Activated naive CD4-positive, alpha-beta T cell treated with anti-CD3 and anti-CD28 coated beads for 36 hours (primary cell): ENCODE measurements at regions of chr20 and their contacts with region 1.

Region 1: DNA sequence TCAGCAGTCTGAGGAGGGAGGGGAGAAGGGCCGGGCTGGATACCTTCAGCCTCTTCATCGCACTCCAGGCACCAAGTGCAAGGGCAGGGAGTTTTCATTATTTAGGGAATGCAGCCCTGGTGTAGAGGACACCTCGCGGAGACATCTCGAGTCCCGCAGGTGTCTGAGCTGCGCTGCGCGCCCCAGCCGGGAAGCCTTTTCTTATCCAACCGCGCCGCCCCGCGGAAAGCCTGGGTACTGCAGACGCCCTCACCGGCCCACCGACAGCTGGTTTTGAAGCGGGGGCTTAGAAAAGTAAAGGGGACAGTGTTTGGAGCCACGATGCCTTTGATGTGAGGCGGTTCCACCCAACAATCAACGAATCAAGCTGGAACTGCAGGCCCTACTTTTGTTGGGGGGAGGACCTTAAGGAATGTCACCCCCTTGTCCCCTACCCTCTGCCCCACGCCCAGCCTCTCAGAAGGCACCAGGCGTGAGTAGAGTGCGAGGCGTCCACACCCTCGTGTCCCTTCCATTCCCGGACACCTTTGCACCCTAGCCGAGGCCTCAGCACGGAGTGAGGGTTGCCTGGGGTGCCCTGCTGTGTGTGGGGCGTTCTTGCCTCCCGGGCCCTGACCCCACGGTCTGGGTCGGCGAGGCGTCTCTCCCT is 8.6 kb downstream of the NKX2-2 start:
- DNase-seq: peak; percentile 82
- H3K4me3 Mint-ChIP-seq: peak overlapping the region; percentile 62
- H3K27ac Mint-ChIP-seq: no peak overlapping the region
- H3K4me1 Mint-ChIP-seq: peaks cover 28% of the 10 kb centered on the region
- H3K27me3 Mint-ChIP-seq: peaks cover 53% of the 10 kb centered on the region

Region 2: DNA sequence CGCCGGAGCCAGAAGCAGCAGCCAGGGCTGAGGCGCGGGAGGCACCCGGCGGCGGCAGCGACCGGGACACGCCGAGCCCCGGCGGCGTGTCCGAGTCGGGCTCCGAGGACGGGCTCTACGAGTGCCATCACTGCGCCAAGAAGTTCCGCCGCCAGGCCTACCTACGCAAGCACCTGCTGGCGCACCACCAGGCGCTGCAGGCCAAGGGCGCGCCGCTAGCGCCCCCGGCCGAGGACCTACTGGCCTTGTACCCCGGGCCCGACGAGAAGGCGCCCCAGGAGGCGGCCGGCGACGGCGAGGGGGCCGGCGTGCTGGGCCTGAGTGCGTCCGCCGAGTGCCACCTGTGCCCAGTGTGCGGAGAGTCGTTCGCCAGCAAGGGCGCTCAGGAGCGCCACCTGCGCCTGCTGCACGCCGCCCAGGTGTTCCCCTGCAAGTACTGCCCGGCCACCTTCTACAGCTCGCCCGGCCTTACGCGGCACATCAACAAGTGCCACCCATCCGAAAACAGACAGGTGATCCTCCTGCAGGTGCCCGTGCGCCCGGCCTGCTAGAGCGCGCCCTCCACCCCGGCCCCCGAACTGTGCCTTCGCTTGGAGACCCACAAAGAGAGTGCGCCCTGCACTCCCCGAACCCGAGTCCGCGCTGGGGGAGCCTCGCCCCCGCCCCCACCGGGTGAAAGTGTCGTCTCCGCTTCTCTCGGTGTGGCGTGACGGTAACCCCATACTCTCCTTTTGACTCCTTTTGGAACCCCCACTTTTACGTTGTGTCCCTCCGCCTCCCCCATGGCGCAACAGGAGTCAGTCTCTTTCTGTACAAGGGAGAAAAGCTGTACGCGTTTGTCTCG is 1135.8 kb before region 1 on chr20:
- CTCF ChIA-PET with region 1: no interaction called
- intact Hi-C with region 1: loop called (anchors 5 kb)
- DNase-seq: no peak
- H3K4me3 Mint-ChIP-seq: peak overlapping the region; percentile 46
- H3K27ac Mint-ChIP-seq: no peak overlapping the region
- H3K4me1 Mint-ChIP-seq: peaks cover 17% of the 10 kb centered on the region
- H3K27me3 Mint-ChIP-seq: peaks cover 70% of the 10 kb centered on the region

Region 3: DNA sequence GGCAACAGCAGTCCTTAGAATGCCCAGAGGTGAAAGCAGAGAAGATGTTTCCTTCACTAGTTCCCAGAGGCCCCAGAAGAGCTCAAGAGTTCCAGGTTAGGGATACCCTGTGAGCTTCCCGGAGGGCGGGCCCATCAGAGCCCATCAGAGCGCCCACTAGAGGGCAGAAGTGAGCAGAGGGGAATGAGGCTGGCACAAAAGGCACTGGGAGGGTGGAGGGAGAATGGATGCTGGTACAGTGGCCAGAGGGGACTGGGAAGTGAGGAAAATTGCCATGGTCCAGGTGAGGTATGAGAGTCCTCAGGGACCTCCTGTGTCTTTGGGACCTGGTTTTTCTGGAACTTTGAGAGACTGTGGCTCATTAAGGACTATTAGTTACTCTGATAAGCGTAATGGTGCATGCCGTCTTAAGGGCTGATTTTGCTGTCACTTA is 456.4 kb before region 1 on chr20:
- CTCF ChIA-PET with region 1: interaction called, 5 read pairs
- intact Hi-C with region 1: loop called (anchors 5 kb)
- DNase-seq: peak; percentile 56
- H3K4me3 Mint-ChIP-seq: no peak overlapping the region
- H3K27ac Mint-ChIP-seq: no peak overlapping the region
- H3K4me1 Mint-ChIP-seq: no peaks in the 10 kb centered on the region
- H3K27me3 Mint-ChIP-seq: peaks cover 23% of the 10 kb centered on the region

Region 4: DNA sequence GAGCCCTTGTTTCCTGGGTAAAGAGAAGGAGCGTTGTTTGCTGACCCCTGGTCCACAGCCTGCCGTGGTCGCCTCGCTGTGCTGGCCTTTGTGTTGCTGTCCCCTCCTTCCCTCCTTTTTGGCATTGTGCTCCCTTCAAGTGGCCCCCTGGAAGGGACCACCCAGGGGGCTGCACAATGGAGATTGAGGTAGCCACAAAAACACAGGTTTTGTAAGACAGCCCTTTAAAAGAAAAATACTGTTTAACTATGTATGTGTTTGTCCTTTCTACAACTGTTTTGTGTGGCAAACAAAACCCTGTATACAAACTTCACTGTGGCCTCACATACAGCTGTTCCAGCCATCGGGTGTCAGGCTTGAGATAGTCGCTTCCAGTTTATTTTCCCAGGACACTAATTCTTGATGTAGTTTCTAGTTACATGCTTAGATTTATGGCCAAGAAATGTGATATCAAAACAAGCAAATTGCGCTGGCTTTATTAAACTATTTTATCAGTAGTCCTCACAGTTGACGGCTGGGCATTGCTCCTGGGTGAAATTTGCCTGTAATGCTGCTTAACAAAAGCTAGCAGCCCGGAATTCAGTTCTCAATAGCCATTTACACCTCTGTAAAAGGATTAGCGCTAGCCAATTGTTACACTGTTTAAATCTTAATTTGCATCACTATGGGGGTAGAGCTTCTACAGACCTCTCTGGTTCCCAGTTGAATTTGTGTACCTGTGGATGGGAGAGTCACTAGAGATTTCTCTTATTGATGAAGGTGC is 315.3 kb before region 1 on chr20:
- CTCF ChIA-PET with region 1: no interaction called
- intact Hi-C with region 1: no loop called
- DNase-seq: no peak
- H3K4me3 Mint-ChIP-seq: no peak overlapping the region
- H3K27ac Mint-ChIP-seq: no peak overlapping the region
- H3K4me1 Mint-ChIP-seq: no peaks in the 10 kb centered on the region
- H3K27me3 Mint-ChIP-seq: no peaks in the 10 kb centered on the region

Region 5: DNA sequence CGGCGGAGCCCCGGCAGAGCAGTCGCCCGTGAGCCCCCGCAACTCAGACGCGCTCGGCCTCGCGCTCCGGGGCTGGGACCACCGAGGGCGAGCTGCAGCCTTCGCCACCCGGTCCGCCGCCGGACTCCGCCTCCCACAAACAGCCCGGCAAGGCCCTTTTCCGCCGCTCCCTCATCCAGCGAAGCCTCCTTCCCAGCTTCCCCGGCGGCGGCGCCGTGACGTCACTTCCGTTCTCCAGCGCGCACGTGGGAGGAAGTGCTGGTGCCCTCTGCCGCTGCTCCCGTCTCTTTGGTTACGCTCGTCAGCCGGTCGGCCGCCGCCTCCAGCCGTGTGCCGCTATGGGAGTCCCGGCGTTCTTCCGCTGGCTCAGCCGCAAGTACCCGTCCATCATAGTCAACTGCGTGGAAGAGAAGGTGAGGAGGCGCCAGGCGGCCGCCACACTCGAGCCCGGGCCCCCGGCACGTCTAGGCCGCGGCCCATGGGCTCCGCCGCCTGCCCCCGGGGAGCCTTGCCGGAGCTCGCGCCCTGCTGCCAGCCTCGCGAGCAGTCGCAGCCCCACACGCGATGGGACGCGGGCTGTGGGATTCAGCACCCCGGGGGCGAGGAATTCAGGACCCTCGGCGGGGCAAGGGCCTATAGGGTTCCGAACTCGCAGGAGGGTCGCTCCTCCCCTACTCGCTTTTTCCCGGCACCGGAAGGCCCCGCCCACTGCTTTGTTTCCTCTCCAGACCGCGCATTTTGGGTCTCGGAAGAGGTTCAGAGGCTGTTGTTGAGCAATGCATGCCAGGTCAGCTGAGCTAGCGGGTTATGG is 202.0 kb before region 1 on chr20 and contains the start of gene XRN2:
- CTCF ChIA-PET with region 1: interaction called, 4 read pairs
- intact Hi-C with region 1: loop called (anchors 1 kb)
- DNase-seq: peak; percentile 96
- H3K4me3 Mint-ChIP-seq: peak within 1 kb of the TSS; percentile 94
- H3K27ac Mint-ChIP-seq: peak within 1 kb of the TSS; percentile 96
- H3K4me1 Mint-ChIP-seq: peaks cover 29% of the 10 kb centered on the region
- H3K27me3 Mint-ChIP-seq: no peaks in the 10 kb centered on the region
- total RNA-seq, gene XRN2: 76.5 to 81.9 TPM

Region 6: DNA sequence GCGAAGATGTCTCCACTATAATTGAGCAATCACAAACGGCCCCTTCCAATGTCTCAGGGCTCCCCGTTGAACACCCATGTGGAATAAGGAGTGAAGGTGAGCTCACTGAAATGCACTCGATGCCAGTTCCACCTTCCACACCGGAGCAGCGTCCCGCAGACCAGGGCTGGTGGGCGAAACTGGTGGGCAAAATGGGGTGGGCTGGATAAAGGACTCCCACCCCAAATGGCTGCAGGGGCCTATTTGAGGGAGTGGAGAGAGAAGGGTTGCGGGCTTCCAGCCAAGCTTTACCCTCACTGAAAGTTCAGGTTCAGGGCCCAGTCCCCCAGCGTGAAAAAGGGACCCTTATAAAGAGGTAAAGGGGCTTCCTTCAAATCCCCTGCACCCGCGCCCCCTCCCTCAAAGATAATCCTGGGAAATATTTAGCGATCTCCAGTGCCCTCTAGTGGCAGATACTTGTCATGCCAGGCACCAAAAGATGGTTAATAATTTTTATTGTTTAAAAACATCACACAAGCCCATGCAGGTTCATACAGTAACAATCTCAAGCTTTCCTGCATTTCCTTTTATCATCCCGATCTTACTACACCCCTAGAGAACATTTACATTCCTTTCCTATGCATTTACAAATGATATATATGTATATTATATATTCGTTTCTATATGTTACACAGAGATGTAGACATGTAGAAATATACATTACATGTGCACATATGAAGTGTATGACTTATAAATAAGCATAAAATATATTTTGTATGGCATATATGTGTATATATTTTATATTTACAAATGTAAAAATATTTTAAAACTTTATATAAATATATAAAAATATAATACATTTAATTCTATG is 66.8 kb after region 1 on chr20:
- CTCF ChIA-PET with region 1: interaction called, 5 read pairs
- intact Hi-C with region 1: loop called (anchors 1 kb)
- DNase-seq: peak; percentile 26
- H3K4me3 Mint-ChIP-seq: no peak overlapping the region
- H3K27ac Mint-ChIP-seq: no peak overlapping the region
- H3K4me1 Mint-ChIP-seq: peaks cover 7% of the 10 kb centered on the region
- H3K27me3 Mint-ChIP-seq: peaks cover 7% of the 10 kb centered on the region

Region 7: DNA sequence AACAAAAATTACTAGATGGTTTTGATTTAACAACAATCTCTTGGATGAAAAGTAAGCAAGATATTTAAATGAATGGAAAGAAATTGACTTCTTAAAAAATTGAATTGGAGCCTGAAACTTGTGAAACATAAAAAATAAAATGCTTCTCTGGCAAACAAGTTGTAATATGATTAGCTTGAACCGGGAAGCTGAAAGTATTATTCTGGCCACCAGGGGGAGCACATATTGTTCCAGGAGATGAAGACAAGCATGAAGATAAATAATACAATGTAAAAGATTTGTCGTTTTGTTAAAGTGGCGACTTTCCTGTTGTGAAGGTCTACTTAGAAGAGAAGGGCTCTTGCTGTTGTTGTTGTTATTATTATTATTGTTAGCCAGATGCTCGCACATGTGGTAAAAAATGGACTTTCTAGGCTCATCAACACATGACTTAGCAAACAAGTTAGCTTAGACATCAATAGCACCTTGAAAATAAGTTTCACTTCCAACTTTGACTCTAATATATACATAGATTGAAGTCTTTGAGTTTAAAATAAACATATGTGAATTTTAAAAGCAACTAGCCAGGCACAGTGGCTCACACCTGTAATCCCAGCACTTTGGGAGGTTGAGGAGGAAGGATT is 214.4 kb after region 1 on chr20:
- CTCF ChIA-PET with region 1: no interaction called
- intact Hi-C with region 1: no loop called
- DNase-seq: peak; percentile 69
- H3K4me3 Mint-ChIP-seq: no peak overlapping the region
- H3K27ac Mint-ChIP-seq: no peak overlapping the region
- H3K4me1 Mint-ChIP-seq: peaks cover 3% of the 10 kb centered on the region
- H3K27me3 Mint-ChIP-seq: peaks cover 32% of the 10 kb centered on the region

Region 8: DNA sequence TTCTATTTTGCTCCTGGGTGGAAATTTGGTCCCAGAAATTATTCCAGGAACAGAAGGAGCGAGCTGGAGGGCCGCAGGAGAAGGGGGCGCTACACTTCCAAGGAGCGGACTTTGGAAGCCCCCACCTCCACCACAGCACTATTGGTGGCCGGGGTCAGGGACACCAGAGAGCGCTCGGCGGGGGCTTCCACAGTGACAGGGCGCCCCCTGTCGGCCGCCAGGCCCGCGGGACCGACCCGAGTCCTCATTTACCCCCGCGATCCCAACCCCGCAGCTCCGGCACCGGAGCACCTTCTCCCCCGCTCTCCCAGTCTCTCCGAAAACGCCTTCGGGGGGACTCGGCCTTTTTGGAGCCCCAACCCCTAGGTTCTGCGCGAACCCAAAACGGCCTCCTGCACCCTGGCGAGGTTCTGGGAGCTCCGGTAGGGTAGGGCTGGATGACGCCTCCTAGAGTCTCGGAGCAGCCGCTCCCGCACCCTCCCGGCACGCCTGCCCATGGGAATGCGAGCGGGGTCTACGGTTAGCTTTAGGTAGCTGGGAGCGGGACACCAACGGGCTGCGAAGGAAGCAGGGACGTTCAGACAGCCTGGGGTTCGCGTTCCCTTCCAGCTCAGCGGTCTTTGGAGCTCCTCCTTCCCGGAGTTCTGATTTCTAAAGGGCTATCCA is 1081.5 kb after region 1 on chr20:
- CTCF ChIA-PET with region 1: no interaction called
- intact Hi-C with region 1: loop called (anchors 10 kb)
- DNase-seq: peak; percentile 28
- H3K4me3 Mint-ChIP-seq: no peak overlapping the region
- H3K27ac Mint-ChIP-seq: no peak overlapping the region
- H3K4me1 Mint-ChIP-seq: peaks cover 3% of the 10 kb centered on the region
- H3K27me3 Mint-ChIP-seq: peaks cover 57% of the 10 kb centered on the region